HCT116 (cell line): ENCODE measurements at regions of chr17 and their contacts with region 1.

Region 1: GRCh38 chr17:35747540-35748017 is 5.5 kb downstream of the GAS2L2 start:
- DNase-seq: peak; percentile 64
- ATAC-seq: peak; percentile 94
- H3K4me3 ChIP-seq: no peak overlapping the region
- H3K27ac ChIP-seq: no peak overlapping the region
- H3K4me1 ChIP-seq: no peaks in the 10 kb centered on the region
- H3K27me3 ChIP-seq: peaks cover 4% of the 10 kb centered on the region; the same call in 1 of the 2 replicates
- CTCF ChIP-seq: peak; percentile 56 to 87 (median 77); a peak in 5 of 6 replicates
- POLR2A ChIP-seq: no peak
- RAD21 ChIP-seq: peak; percentile 92

Region 2: GRCh38 chr17:34542700-34543336 is 1204.8 kb before region 1 on chr17:
- CTCF ChIA-PET with region 1: interaction called, 4 read pairs
- POLR2A ChIA-PET with region 1: no interaction called
- RAD21 ChIA-PET with region 1: no interaction called
- intact Hi-C with region 1: loop called (anchors 10 kb)
- DNase-seq: no peak
- ATAC-seq: peak; percentile 73
- H3K4me3 ChIP-seq: no peak overlapping the region
- H3K27ac ChIP-seq: no peak overlapping the region
- H3K4me1 ChIP-seq: no peaks in the 10 kb centered on the region
- H3K27me3 ChIP-seq: peaks cover 35% of the 10 kb centered on the region
- CTCF ChIP-seq: peak; percentile 70 to 99 (median 90)
- POLR2A ChIP-seq: no peak
- RAD21 ChIP-seq: peak; percentile 74

Region 3: GRCh38 chr17:35127751-35128514 is 619.6 kb before region 1 on chr17:
- CTCF ChIA-PET with region 1: interaction called, 3 read pairs
- POLR2A ChIA-PET with region 1: no interaction called
- RAD21 ChIA-PET with region 1: no interaction called
- intact Hi-C with region 1: loop called (anchors 5 kb)
- DNase-seq: no peak
- ATAC-seq: no peak
- H3K4me3 ChIP-seq: no peak overlapping the region
- H3K27ac ChIP-seq: no peak overlapping the region
- H3K4me1 ChIP-seq: no peaks in the 10 kb centered on the region
- H3K27me3 ChIP-seq: no peaks in the 10 kb centered on the region
- CTCF ChIP-seq: no peak
- POLR2A ChIP-seq: no peak
- RAD21 ChIP-seq: no peak

Region 4: GRCh38 chr17:35537601-35538141 is 209.9 kb before region 1 on chr17 and contains the start of gene SLFN12L:
- CTCF ChIA-PET with region 1: interaction called, 9 read pairs
- POLR2A ChIA-PET with region 1: no interaction called
- RAD21 ChIA-PET with region 1: interaction called in 1 of 2 experiments, 3 read pairs
- intact Hi-C with region 1: loop called (anchors 1 kb)
- DNase-seq: no peak
- ATAC-seq: no peak
- H3K4me3 ChIP-seq: no peak within 1 kb of the TSS
- H3K27ac ChIP-seq: no peak within 1 kb of the TSS
- H3K4me1 ChIP-seq: peaks cover 0 to 5% of the 10 kb centered on the region in 2 experiments; a peak in 1 of 4 replicates
- H3K27me3 ChIP-seq: no peaks in the 10 kb centered on the region; the same call in 1 of the 2 replicates
- CTCF ChIP-seq: no peak
- POLR2A ChIP-seq: no peak
- RAD21 ChIP-seq: no peak
- total RNA-seq, gene SLFN12L: 0.17 TPM

Region 5: GRCh38 chr17:35612924-35613521 is 134.6 kb before region 1 on chr17:
- CTCF ChIA-PET with region 1: interaction called, 40 read pairs
- POLR2A ChIA-PET with region 1: interaction called, 4 read pairs
- RAD21 ChIA-PET with region 1: interaction called, 5 to 7 read pairs
- intact Hi-C with region 1: loop called (anchors 1 kb)
- DNase-seq: peak; percentile 12
- ATAC-seq: peak; percentile 58
- H3K4me3 ChIP-seq: no peak overlapping the region
- H3K27ac ChIP-seq: no peak overlapping the region
- H3K4me1 ChIP-seq: no peaks in the 10 kb centered on the region
- H3K27me3 ChIP-seq: no peaks in the 10 kb centered on the region
- CTCF ChIP-seq: peak; percentile 44 to 75 (median 68); a peak in 5 of 6 replicates
- POLR2A ChIP-seq: no peak
- RAD21 ChIP-seq: peak; percentile 62